ENCODE measurements at regions of chr4 and their contacts with region 1.

Region 1: DNA sequence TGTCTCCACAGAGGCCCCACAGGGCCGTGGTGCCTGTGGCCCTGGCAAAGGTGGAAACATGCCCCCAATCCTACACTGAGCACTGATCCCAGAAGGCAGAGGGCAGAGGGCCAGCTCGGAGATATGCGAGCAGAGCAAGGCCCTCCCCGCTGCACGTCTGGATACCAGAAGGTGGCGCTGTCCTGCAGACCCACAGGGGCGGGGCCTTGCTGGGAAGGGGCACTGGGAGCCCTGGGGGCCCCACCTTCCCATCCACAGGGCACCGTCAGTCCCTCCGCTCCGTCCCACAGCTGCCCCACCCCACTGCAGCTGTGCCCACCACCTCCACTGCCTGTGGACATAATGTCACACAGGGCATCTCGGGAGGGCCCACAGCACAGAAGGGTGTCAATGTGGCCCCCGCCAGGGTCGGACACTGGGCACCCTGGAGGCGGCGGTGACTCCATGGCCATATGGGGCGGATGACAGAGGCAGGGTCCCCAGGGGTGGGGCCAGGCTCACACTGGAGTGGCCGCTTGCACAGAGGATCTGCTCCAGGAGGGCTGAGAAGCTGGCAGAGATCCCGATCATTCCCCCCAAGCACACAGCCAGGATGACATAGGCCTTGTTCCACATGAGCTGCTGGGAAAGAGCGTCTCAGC is 4.8 kb downstream of the SLC49A3 start:
- DNase-seq: peak; percentile 50 to 62 (median 54)
- H3K4me3 ChIP-seq: no peak overlapping the region
- H3K4me3 Mint-ChIP-seq: no peak overlapping the region
- H3K27ac ChIP-seq: peak overlapping the region in 1 of 2 donors; percentile 5
- H3K27ac Mint-ChIP-seq: peak overlapping the region in 3 of 7 donors; percentile 25 to 48 (median 33)
- H3K4me1 ChIP-seq: peaks cover 47 to 56% of the 10 kb centered on the region in 2 donors
- H3K4me1 Mint-ChIP-seq: peaks cover 45% of the 10 kb centered on the region
- H3K27me3 ChIP-seq: no peaks in the 10 kb centered on the region
- H3K27me3 Mint-ChIP-seq: peaks cover 1 to 13% (median 8%) of the 10 kb centered on the region in 3 donors
- CTCF ChIP-seq: peak; percentile 97

Region 2: GRCh38 chr4:337143-337931 is 346.8 kb before region 1 on chr4 and contains the start of gene ZNF141:
- intact Hi-C with region 1: loop called in 1 of 2 experiments (anchors 10 kb)
- DNase-seq: peak; percentile 90 to 95 (median 93)
- H3K4me3 ChIP-seq: peak within 1 kb of the TSS; percentile 63 to 93 (median 76)
- H3K4me3 Mint-ChIP-seq: peak within 1 kb of the TSS; percentile 99
- H3K27ac ChIP-seq: peak within 1 kb of the TSS; percentile 85 to 95
- H3K27ac Mint-ChIP-seq: peak within 1 kb of the TSS; percentile 96 to 99 (median 97)
- H3K4me1 ChIP-seq: peaks cover 14 to 26% of the 10 kb centered on the region in 2 donors
- H3K4me1 Mint-ChIP-seq: peaks cover 20% of the 10 kb centered on the region
- H3K27me3 ChIP-seq: peaks cover 0 to 3% of the 10 kb centered on the region in 2 donors
- H3K27me3 Mint-ChIP-seq: peaks cover 2 to 4% (median 2%) of the 10 kb centered on the region in 3 donors
- CTCF ChIP-seq: no peak
- polyA plus RNA-seq, gene ZNF141: 2.5 to 4.2 (median 2.7) TPM

Region 3: DNA sequence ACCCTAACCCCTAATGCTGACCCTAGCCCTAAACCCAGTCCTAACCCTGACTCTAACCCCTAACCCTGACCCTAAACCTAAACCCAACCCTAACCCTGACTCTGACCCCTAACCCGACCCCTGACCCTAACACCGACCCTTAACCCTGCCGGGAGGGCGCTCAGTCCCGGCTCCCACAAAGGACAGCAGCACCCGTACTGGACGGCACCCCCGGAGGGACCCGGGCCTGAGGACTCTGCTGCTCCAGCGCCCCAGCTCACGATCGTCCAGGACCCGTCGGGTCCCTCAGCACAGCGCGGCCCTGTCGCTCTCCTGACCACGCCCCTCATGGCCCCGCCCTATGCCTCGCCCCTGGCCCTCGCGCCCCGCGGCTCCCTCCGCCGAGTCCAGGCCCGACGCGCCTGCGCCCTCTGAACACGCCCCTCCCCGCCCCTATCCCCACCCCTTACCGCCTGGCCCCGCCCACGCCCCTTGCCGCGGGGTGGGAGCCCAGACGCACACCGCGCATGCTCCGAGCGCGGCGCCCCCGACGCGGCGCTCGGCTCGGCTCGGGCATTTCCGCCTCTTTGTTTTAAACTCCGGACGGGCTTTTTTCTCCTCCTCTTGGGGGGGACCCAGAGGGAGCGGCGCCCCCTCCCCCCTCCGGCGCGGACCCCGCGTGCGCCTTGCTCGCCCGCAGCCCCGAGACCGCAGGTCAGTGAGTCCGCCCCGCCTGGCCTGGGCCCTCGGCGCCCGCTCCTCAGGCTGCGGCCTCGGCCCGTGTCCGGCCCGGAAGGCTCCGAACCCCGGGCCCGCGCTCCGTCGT is 21.4 kb after region 1 on chr4 and contains the start of gene PCGF3:
- intact Hi-C with region 1: loop called in 1 of 2 experiments (anchors 2 kb)
- DNase-seq: peak; percentile 92 to 96 (median 93)
- H3K4me3 ChIP-seq: peak within 1 kb of the TSS; percentile 60 to 94 (median 86)
- H3K4me3 Mint-ChIP-seq: peak within 1 kb of the TSS; percentile 78 to 88
- H3K27ac ChIP-seq: peak within 1 kb of the TSS; percentile 40 to 96
- H3K27ac Mint-ChIP-seq: peak within 1 kb of the TSS; percentile 69 to 97 (median 92)
- H3K4me1 ChIP-seq: peaks cover 41 to 58% of the 10 kb centered on the region in 2 donors
- H3K4me1 Mint-ChIP-seq: peaks cover 34% of the 10 kb centered on the region
- H3K27me3 ChIP-seq: no peaks in the 10 kb centered on the region
- H3K27me3 Mint-ChIP-seq: peaks cover 2 to 4% (median 3%) of the 10 kb centered on the region in 3 donors
- CTCF ChIP-seq: no peak
- polyA plus RNA-seq, gene PCGF3: 7.0 to 163 (median 8.3) TPM

Measured in CD14-positive monocyte (primary cell).